Activated CD4-positive, alpha-beta T cell treated with anti-CD3 and anti-CD28 coated beads for 36 hours (primary cell): ENCODE measurements at regions of chr3 and their contacts with region 1.

Region 1: DNA sequence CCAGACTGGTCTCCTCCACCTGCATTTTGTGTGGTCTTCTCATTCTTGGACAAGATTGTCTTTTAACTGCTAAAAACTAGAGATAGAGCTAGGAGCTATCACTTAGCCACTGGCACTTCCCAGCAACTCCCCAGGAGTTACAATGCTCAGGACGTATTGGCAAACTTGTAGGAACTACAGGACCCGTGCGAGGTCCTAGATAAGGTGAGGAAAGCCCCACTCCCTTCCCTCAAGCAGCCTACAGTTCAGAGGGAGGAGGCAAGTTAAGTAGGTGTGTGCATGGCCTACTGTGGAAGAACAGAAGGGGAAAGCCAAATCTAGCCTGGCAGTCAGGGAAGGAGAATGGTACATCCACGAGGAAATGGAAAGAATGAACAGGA is 504.7 kb upstream of the PROK2 start:
- DNase-seq: no peak
- ATAC-seq: no peak
- H3K4me3 Mint-ChIP-seq: no peak overlapping the region
- H3K27ac Mint-ChIP-seq: no peak overlapping the region
- H3K4me1 Mint-ChIP-seq: peaks cover 12% of the 10 kb centered on the region
- H3K27me3 Mint-ChIP-seq: peaks cover 3% of the 10 kb centered on the region

Region 2: GRCh38 chr3:72238010-72238691 is 51.5 kb before region 1 on chr3:
- CTCF ChIA-PET with region 1: no interaction called
- POLR2A ChIA-PET with region 1: no interaction called
- intact Hi-C with region 1: loop called in 1 of 2 experiments (anchors 5 kb)
- DNase-seq: no peak
- ATAC-seq: no peak
- H3K4me3 Mint-ChIP-seq: no peak overlapping the region
- H3K27ac Mint-ChIP-seq: no peak overlapping the region
- H3K4me1 Mint-ChIP-seq: peaks cover 3% of the 10 kb centered on the region
- H3K27me3 Mint-ChIP-seq: peaks cover 6% of the 10 kb centered on the region

Region 3: DNA sequence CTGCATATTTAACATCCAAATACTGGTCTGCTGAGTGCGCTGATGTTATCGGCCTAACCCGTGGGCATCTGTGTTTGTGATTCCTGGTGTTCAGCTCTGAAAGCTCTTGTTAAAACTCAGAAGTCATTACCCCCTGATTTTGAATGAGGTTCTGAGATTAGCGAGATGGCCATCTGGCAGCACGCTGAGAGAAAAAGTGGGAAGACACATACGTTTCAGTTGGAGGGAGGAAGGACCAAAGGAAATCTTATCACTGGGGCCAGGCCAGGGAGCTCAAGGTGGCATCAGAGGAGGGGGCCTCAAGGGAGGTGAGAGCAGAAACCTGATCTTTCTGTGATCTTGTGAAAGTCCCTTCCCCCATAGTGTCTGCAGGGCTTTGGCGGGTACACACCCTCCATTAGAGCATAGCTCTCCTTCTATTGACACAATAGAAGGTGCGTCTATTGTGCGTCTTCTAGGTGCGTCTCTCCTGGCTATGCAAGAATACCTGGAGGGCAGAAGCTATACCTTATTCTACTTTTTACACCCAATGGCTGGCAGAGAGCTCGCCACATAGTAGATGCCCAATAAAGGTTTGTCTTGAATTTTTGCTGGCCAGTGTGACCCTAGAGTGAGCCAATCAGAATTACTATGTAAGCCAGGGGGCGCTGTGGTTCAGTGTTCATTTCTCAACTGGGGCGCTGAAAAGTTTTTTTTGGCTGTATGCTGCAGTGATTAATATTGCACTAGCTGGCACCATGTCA is 376.2 kb after region 1 on chr3:
- CTCF ChIA-PET with region 1: no interaction called
- POLR2A ChIA-PET with region 1: no interaction called
- intact Hi-C with region 1: no loop called
- DNase-seq: peak; percentile 76
- ATAC-seq: peak; percentile 81
- H3K4me3 Mint-ChIP-seq: no peak overlapping the region
- H3K27ac Mint-ChIP-seq: no peak overlapping the region
- H3K4me1 Mint-ChIP-seq: peaks cover 3% of the 10 kb centered on the region
- H3K27me3 Mint-ChIP-seq: no peaks in the 10 kb centered on the region